Right ventricle myocardium inferior (tissue), 1 donor: ENCODE measurements at regions of chr5 and their contacts with region 1.

Region 1: GRCh38 chr5:42057254-42057690 is 132.2 kb downstream of the FBXO4 start:
- DNase-seq: no peak
- ATAC-seq: peak; percentile 34

Region 2: GRCh38 chr5:41856644-41857491 is 200.4 kb before region 1 on chr5:
- intact Hi-C with region 1: loop called (anchors 5 kb)
- DNase-seq: no peak
- ATAC-seq: peak; percentile 75

Region 3: GRCh38 chr5:42583322-42583721 is 526.0 kb after region 1 on chr5:
- intact Hi-C with region 1: no loop called
- DNase-seq: peak; percentile 65
- ATAC-seq: peak; percentile 70